Endothelial cell of umbilical vein (primary cell): ENCODE measurements at regions of chrX and their contacts with region 1.

Region 1: GRCh38 chrX:149527705-149528104 is 13.1 kb upstream of the EOLA1 start:
- DNase-seq: peak; percentile 38
- H3K4me3 ChIP-seq: no peak overlapping the region
- H3K27ac ChIP-seq: no peak overlapping the region
- H3K4me1 ChIP-seq: no peaks in the 10 kb centered on the region
- H3K27me3 ChIP-seq: no peaks in the 10 kb centered on the region
- CTCF ChIP-seq: peak; percentile 28 to 30
- POLR2A ChIP-seq: no peak

Region 2: GRCh38 chrX:149476513-149476912 is 51.2 kb before region 1 on chrX:
- CTCF ChIA-PET with region 1: no interaction called
- POLR2A ChIA-PET with region 1: no interaction called
- dilution Hi-C with region 1: no loop called
- intact Hi-C with region 1: no loop called
- DNase-seq: no peak
- H3K4me3 ChIP-seq: no peak overlapping the region
- H3K27ac ChIP-seq: no peak overlapping the region
- H3K4me1 ChIP-seq: peaks cover 5% of the 10 kb centered on the region
- H3K27me3 ChIP-seq: no peaks in the 10 kb centered on the region
- CTCF ChIP-seq: no peak
- POLR2A ChIP-seq: no peak

Region 3: DNA sequence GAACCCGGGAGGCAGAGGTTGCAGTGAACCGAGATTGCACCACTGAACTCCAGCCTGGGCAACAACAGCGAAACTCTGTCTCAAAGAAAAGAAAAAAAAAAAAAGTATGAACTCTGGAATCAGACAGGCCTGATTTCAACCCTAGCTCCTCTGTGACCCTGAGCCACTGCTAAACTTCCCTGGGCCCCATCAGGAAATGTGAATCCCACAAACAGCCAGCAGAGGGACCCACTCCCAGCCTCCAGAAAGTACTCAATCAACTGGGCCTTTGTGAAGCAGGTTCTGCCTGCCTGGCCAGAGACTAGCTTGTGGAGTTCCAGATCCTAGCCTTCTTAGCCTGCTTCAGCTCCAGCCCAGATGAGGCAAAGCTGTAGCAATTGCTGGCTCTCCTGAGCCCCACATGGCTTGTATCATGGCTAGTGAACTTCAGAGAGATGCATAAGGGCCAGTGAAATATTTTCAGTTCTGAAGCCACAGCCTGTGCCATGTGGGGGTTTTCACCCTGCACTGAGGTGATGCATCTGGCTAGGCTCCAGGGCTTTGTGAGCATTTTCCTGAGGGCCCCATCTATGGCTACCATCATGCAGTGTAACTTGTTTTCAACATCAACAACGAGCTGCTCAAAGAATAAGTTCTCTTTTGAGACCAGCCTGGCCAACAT is 15.3 kb before region 1 on chrX:
- CTCF ChIA-PET with region 1: interaction called, 9 read pairs
- POLR2A ChIA-PET with region 1: no interaction called
- dilution Hi-C with region 1: no loop called
- intact Hi-C with region 1: loop called (anchors 1 kb)
- DNase-seq: peak; percentile 55
- H3K4me3 ChIP-seq: no peak overlapping the region
- H3K27ac ChIP-seq: no peak overlapping the region
- H3K4me1 ChIP-seq: peaks cover 15% of the 10 kb centered on the region
- H3K27me3 ChIP-seq: peaks cover 0 to 2% of the 10 kb centered on the region in 2 experiments
- CTCF ChIP-seq: peak; percentile 59 to 62
- POLR2A ChIP-seq: no peak